Tibial artery (tissue), 4 donors: ENCODE measurements at regions of chr4 and their contacts with region 1.

Region 1: DNA sequence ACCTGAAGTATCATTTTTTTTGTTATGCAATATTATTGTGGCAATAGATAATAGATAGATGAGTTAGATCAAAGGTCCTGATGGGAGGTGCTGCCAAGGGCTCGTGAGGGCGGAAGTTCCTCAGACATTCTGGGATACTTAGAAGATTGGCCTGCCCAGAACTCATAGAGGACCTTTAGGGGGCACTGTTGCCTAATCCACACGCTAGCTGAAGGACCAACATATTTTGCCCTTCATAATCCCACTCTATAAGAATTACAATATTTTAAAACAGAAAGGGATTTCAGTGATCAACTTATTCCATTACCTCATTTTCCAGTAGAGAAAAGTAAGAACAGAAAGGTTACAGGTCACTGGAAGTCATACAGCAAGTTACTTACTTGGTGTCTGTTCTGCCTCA is 22.9 kb upstream of the COX7B2 start:
- DNase-seq: no peak
- H3K4me3 ChIP-seq: no peak overlapping the region
- H3K27ac ChIP-seq: peak overlapping the region in 1 of 2 donors; percentile 10
- H3K4me1 ChIP-seq: no peaks in the 10 kb centered on the region
- H3K27me3 ChIP-seq: no peaks in the 10 kb centered on the region
- CTCF ChIP-seq: peak; percentile 47 to 58

Region 2: DNA sequence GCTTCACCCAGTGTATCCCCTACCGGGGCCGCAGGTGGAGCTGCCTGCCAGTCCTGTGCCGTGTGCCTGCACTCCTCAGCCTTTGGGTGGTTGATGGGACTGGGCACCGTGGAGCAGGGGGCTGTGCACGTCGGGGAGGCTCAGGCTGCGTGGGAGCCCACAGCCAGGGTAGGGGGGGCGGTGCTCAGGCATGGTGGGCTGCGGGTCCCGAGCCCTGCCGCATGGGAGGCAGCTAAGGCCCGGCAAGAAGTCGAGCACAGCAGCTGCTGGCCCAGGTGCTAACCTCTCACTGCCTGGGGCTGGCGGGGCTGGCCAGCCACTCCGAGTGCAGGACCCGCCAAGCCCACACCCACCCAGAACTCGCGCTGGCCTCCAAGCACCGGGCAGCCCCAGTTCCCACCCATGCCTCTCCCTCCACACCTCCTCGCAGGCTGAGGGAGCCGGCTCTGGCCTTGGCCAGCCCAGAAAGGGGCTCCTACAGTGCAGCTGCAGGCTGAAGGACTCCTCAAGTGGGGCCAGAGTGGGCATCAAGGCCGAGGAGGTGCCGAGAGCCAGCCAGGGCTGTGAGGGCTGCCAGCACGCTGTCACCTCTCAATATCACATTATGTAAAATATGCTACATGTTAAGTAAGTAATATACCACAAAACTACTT is 127.1 kb before region 1 on chr4:
- intact Hi-C with region 1: no loop called
- DNase-seq: no peak
- H3K4me3 ChIP-seq: no peak overlapping the region
- H3K27ac ChIP-seq: no peak overlapping the region
- H3K4me1 ChIP-seq: no peaks in the 10 kb centered on the region
- H3K27me3 ChIP-seq: no peaks in the 10 kb centered on the region
- CTCF ChIP-seq: no peak

Region 3: GRCh38 chr4:47002593-47002992 is 70.6 kb after region 1 on chr4:
- intact Hi-C with region 1: loop called (anchors 5 kb)
- DNase-seq: no peak
- H3K4me3 ChIP-seq: no peak overlapping the region
- H3K27ac ChIP-seq: no peak overlapping the region
- H3K4me1 ChIP-seq: no peaks in the 10 kb centered on the region
- H3K27me3 ChIP-seq: no peaks in the 10 kb centered on the region
- CTCF ChIP-seq: peak in 1 of 2 experiments; percentile 30

Region 4: GRCh38 chr4:47383829-47384427 is 451.9 kb after region 1 on chr4:
- intact Hi-C with region 1: loop called (anchors 5 kb)
- DNase-seq: no peak
- H3K4me3 ChIP-seq: no peak overlapping the region
- H3K27ac ChIP-seq: no peak overlapping the region
- H3K4me1 ChIP-seq: no peaks in the 10 kb centered on the region
- H3K27me3 ChIP-seq: no peaks in the 10 kb centered on the region
- CTCF ChIP-seq: peak; percentile 41 to 49